ENCODE measurements at regions of chr1 and their contacts with region 1.

Region 1: DNA sequence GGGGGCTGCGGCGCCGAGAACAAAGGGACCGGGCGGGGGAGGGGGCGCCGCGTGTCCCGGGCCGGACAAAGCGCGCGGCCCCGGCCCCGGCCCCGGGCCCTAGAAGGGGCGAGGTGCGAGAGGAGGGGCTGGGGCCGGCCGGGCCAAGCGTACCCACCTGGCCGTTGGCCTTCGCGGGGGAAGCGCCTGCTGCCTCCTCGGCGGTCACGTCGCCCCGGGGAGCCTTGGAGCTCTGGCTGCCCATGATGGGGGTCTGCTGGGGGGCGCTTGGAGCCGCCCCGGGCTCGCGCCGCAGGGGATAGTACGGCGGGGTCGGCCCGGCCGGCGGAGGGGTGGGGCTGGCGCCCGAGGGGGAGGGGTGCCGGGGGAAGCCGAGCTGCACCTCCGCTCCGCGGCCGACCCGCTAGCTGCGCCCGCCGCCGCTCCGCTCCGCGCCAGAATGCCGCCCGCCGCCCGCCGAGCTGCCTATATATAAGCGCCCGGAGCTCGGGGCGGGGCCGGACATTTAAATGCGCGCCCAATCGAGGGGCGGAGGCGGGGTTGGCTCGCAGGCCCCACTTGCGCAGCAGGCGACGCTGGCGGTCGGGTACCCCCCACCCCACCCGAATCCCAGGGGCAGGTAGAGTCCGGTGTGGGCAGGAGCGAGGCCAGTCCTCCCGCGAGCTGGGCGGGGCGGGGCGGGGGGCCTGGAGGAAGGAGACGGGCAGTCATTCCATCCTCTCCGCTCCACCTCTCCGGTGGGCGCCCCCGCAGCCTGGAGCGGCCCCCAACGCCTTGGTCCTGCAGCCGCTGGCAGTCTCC is at the start of gene MARCKSL1:
- DNase-seq: peak; percentile 83 to 92 (median 86)
- H3K4me3 ChIP-seq: peak within 1 kb of the TSS; percentile 52 to 90 (median 75)
- H3K27ac ChIP-seq: peak within 1 kb of the TSS; percentile 85 to 100 (median 97)
- H3K27me3 ChIP-seq: no peaks in the 10 kb centered on the region
- CTCF ChIP-seq: peak in 16 of 56 donors; percentile 6 to 36 (median 18)
- total RNA-seq, gene MARCKSL1: 90.1 to 633 (median 196) TPM

Region 2: DNA sequence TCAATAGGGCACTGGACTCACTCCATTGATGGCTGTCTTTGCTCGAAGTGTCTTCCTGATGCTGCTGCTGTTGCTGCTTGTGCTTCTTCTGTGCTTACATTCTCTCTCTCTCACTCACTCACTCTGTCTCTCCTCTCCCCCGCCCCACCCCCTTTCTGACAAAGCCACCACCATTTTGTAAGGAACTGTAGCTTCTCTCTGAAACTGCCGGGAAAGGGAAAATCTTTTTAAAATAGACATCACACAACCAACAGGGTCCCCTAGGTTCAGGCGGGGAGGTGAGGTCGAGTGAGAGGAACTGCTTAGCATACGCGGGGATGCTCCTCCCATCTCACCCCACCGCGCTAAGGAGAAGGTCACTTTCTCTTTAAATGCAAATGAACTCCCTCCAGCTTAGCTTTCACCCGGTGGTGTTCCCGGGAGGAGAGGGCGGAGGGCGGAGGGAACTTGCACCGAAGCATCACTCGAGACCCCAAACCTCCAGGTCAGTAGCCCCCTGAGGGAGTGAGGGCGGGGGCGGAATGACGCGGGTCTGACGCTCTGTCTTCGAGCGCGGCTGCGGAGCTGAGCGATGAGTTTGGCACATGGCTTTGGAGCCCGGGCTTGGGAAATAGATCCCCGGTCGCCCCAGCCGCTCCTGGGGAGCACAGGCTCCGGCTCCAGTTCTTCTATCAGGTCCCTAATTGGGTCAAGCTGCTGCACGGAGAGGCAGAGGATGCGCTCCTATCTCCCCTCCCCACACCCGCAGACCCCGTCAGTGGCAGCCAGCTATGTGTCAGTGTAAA is 135.6 kb before region 1 on chr1 and contains the start of gene CCDC28B:
- intact Hi-C with region 1: loop called in 1 of 2 experiments (anchors 5 kb)
- DNase-seq: peak in 9 of 10 donors; percentile 38 to 80 (median 71)
- H3K4me3 ChIP-seq: peak within 1 kb of the TSS; percentile 53 to 90 (median 75)
- H3K27ac ChIP-seq: peak within 1 kb of the TSS; percentile 1 to 93 (median 83)
- H3K27me3 ChIP-seq: no peaks in the 10 kb centered on the region
- CTCF ChIP-seq: peak in 3 of 56 donors; percentile 6 to 20 (median 9)
- total RNA-seq, gene CCDC28B: 5.1 to 21.3 (median 11.9) TPM

Region 3: GRCh38 chr1:32291708-32292492 is 44.1 kb before region 1 on chr1 and contains the start of gene HDAC1:
- intact Hi-C with region 1: loop called (anchors 5 kb)
- DNase-seq: peak; percentile 46 to 90 (median 85)
- H3K4me3 ChIP-seq: peak within 1 kb of the TSS; percentile 45 to 95 (median 80)
- H3K27ac ChIP-seq: peak within 1 kb of the TSS in 56 of 59 donors; percentile 1 to 92 (median 74)
- H3K27me3 ChIP-seq: peaks cover 0 to 5% (median 0%) of the 10 kb centered on the region in 45 donors
- CTCF ChIP-seq: peak in 13 of 56 donors; percentile 2 to 45 (median 12)
- total RNA-seq, gene HDAC1: 16.3 to 56.0 (median 29.8) TPM

Region 4: DNA sequence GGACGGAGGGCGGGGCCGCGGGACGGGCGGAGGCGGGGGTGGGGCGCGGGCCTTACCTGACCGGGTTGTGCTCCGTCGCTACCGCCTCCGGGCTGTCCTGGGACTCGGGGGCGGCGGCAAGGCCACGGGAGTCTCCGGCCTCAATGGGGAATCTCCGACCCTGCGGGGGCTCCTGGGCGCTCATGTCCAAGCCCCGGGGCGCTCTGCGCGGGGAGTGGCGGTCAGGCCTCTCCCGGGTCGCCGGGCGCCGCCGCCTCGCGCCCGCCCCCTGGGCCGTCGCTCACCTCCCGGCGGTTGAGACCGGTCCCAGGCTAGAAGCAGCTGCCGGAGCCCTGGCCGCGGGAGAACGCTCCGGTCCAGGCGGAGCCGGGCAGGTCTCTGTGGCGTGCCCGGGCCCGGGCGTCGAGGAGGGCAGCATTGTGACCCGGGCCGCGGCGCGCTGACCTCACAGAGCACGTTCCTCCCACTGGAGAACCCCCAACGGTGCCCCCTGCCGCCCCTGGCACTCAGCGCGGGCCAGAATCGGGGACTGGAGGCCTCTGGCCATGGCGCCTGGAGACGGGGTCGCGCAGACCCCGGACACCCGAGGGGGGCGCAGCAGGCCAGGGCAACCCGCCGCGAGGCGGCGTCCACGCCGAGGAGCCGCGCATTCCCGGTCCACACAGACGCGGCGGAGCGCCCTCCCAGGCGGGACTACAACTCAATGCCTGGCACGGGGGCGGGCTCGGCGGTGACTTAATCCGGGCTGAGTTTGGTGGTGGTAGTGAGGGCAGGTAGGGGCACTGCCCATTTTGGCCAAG is 25.9 kb after region 1 on chr1:
- intact Hi-C with region 1: loop called in 1 of 2 experiments (anchors 1 kb)
- DNase-seq: peak; percentile 42 to 82 (median 74)
- H3K4me3 ChIP-seq: peak overlapping the region; percentile 28 to 69 (median 52)
- H3K27ac ChIP-seq: peak overlapping the region; percentile 22 to 91 (median 78)
- H3K27me3 ChIP-seq: no peaks in the 10 kb centered on the region
- CTCF ChIP-seq: peak in 55 of 56 donors; percentile 37 to 95 (median 69)

Region 5: GRCh38 chr1:33072707-33073106 is 736.7 kb after region 1 on chr1:
- intact Hi-C with region 1: loop called in 1 of 2 experiments (anchors 5 kb)
- DNase-seq: no peak
- H3K4me3 ChIP-seq: no peak overlapping the region
- H3K27ac ChIP-seq: peak overlapping the region in 27 of 59 donors; percentile 14 to 99 (median 94)
- H3K27me3 ChIP-seq: no peaks in the 10 kb centered on the region
- CTCF ChIP-seq: no peak

Measured in dorsolateral prefrontal cortex (tissue), 120 donors.